ENCODE measurements at regions of chr12 and their contacts with region 1.

Region 1: DNA sequence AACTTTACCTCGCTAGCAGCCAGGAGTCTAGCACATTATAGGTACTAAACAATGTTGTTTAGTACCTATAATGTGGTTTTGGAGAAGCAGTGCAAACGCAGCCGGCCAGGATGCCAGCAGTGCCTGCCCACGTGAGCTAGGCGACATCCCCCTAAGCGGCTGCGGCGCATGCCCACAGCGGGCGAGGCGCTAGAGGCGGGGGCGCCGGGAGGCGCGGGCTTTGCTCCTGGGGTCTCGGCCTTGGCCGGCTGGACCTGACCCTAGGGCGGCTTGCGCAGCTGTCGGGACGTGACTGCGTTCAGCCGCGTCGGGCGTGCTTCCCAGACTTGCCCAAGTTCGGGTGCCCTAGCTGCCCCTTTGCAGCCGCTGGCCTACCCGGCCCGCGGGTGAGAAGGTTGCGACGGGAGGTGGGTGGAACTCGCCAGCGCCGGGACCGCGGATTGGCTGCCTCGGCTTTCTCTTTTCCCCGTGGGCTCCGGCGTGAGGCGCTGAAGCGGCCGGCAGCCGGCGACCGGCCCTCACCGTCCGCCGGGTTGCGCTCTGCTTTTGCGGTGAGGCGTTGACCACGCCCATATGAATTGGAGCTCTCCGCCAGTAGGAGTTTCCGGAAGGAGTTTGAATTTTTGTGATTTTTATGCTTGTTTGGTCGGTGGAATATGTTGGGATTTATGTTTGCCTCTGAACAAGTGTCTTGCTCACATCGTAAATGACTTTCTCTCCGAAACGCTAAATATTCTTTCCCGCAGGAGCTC is at the start of gene TMEM19:
- H3K4me3 Mint-ChIP-seq: peak within 1 kb of the TSS; percentile 81
- H3K27ac Mint-ChIP-seq: peak within 1 kb of the TSS; percentile 92
- H3K4me1 Mint-ChIP-seq: peaks cover 15% of the 10 kb centered on the region
- H3K27me3 Mint-ChIP-seq: no peaks in the 10 kb centered on the region

Region 2: DNA sequence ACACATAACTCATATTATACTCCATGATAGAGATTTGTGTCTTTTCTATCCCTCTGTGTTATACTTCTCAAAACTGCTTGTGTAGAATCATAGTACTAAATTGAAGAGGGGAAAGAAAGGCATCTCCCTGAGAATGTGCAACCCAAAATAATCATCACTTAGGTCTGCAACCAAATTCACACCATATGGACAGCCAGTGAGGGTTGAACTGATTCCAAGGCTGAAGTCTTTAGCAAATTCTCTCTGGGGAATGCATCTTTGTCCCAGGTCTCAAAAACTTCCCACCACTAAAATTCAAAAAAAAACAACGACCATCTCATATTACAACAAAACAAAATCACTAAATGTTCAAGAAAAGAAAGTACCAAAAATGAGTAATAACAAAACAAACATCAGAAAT is 33.4 kb before region 1 on chr12:
- intact Hi-C with region 1: loop called (anchors 5 kb)
- H3K4me3 Mint-ChIP-seq: no peak overlapping the region
- H3K27ac Mint-ChIP-seq: no peak overlapping the region
- H3K4me1 Mint-ChIP-seq: peaks cover 32% of the 10 kb centered on the region
- H3K27me3 Mint-ChIP-seq: no peaks in the 10 kb centered on the region

Region 3: GRCh38 chr12:71663561-71664294 is 22.4 kb before region 1 on chr12 and contains the start of gene ZFC3H1:
- intact Hi-C with region 1: loop called (anchors 1 kb)
- H3K4me3 Mint-ChIP-seq: peak within 1 kb of the TSS; percentile 93
- H3K27ac Mint-ChIP-seq: peak within 1 kb of the TSS; percentile 100
- H3K4me1 Mint-ChIP-seq: peaks cover 32% of the 10 kb centered on the region
- H3K27me3 Mint-ChIP-seq: no peaks in the 10 kb centered on the region

Region 4: DNA sequence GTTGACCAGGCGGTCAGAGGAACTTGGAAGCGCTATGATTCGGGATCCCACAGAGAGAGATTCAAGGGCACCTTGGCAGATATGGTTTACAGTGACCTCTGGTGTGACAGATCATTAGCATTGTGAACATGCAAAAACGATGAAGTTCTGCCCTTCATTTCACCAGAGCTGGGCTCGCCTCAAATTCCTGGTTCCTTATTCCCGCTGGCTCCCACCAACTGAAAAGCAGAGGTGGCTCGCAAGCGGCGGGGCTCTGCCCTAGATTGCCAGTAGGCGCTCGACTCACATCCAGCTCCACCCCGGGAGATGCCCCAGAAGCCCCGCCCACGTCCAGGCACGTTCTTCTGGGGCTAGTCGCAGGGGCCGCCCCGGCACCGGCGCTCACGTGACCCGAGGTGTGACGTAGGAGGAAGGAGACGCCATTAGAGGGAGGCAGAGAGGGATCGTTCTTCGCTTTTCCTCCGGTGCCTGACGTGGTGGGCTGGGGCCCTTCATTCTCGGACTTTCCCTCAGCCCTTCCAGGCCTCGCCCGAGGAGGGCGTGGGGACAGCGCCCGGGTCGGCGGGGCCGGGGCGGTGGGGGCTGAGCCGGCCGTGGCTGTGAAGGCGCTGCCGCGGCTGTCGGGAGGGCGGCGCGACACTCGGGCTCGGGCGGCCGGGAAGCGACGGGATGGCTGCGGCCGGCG is 68.5 kb after region 1 on chr12 and contains the start of gene RAB21:
- intact Hi-C with region 1: loop called (anchors 2 kb)
- H3K4me3 Mint-ChIP-seq: peak within 1 kb of the TSS; percentile 82
- H3K27ac Mint-ChIP-seq: peak within 1 kb of the TSS; percentile 94
- H3K4me1 Mint-ChIP-seq: peaks cover 16% of the 10 kb centered on the region
- H3K27me3 Mint-ChIP-seq: peaks cover 7% of the 10 kb centered on the region

Measured in dendritic cell treated with granulocyte-macrophage colony-stimulating factor and Interleukin-4, amounts not matched to agents 40 ng/mL and 50 ng/mL, for 4 days (primary cell).